Left ventricle myocardium inferior (tissue), 1 donor: ENCODE measurements at regions of chr15 and their contacts with region 1.

Region 1: GRCh38 chr15:92831655-92832328 is 68.3 kb upstream of the CHD2 start:
- DNase-seq: peak; percentile 94
- H3K4me3 ChIP-seq: peak overlapping the region; percentile 61
- H3K27ac ChIP-seq: peak overlapping the region; percentile 96
- H3K4me1 ChIP-seq: peaks cover 46% of the 10 kb centered on the region
- H3K27me3 ChIP-seq: no peaks in the 10 kb centered on the region
- CTCF ChIP-seq: peak; percentile 23

Region 2: DNA sequence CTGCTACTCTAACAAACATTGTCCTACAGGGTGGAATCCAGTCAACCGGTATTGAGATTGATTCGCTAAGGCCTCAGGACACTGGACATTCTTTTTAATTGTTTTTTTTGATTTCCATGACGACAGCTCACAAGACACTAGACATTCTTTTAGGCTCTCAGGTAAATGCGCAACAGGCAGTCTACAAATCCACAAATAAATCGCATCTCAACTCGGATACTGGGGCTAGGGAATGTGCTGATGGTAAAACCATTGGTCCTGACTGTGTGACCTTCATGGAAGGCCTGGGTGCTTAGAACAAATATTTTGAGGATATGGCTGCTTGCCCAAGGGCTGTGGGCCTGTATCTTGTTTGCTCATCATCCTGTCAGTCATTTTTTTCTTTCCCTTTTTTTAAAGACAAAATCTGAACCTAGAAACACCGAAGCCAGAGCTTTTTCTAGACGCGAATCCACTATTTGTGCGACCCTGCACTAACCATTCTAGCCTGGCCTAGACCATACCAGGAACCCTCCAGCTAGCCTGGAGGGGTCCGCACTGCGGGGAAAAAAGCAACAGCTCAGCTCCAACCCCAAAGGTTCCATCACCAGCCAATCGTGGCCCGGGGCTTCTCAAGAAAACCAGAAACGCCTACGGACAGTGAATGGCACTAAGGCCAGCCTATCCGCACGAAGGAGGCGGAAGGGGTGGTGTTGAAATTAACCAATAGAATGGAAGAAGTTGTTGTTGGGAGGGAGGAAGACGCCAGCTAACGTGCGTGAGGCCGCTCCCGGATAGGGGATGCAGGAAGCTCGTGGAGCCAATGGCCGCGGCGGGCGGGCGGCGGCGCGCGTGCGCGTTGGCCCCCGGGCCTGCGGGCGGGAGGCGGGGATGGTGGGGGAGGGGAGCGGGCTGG is 50.3 kb after region 1 on chr15:
- intact Hi-C with region 1: loop called (anchors 5 kb)
- DNase-seq: peak; percentile 99
- H3K4me3 ChIP-seq: peak overlapping the region; percentile 88
- H3K27ac ChIP-seq: peak overlapping the region; percentile 99
- H3K4me1 ChIP-seq: peaks cover 68% of the 10 kb centered on the region
- H3K27me3 ChIP-seq: no peaks in the 10 kb centered on the region
- CTCF ChIP-seq: no peak